SK-N-SH (cell line): ENCODE measurements at regions of chr7 and their contacts with region 1.

Region 1: DNA sequence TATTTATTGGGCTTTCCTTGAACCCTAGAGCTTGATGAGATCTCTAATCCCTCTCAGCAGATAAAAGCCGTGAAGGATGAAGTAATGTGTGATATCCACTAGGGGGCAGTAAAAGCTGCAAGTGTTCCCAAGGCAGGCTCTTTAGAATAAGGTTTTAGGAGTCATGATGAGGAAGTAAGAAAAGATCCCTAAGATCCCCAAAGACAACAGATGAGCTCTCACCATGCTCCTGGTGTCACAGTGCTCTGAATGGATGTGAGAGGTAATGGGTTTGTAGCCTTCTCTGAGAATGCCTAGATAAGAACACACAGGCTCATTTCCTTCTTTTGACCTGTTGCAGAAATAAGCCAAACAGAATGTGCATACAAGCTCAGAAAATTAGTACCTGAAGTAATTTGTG is 70.4 kb upstream of the ITPRID1 start:
- DNase-seq: peak; percentile 45
- H3K4me3 ChIP-seq: no peak overlapping the region; a peak in 1 of 4 replicates
- H3K27ac ChIP-seq: no peak overlapping the region
- H3K4me1 ChIP-seq: no peaks in the 10 kb centered on the region
- H3K27me3 ChIP-seq: peaks cover 25% of the 10 kb centered on the region
- CTCF ChIP-seq: peak; percentile 98
- EP300 ChIP-seq: no peak
- RAD21 ChIP-seq: peak; percentile 78

Region 2: DNA sequence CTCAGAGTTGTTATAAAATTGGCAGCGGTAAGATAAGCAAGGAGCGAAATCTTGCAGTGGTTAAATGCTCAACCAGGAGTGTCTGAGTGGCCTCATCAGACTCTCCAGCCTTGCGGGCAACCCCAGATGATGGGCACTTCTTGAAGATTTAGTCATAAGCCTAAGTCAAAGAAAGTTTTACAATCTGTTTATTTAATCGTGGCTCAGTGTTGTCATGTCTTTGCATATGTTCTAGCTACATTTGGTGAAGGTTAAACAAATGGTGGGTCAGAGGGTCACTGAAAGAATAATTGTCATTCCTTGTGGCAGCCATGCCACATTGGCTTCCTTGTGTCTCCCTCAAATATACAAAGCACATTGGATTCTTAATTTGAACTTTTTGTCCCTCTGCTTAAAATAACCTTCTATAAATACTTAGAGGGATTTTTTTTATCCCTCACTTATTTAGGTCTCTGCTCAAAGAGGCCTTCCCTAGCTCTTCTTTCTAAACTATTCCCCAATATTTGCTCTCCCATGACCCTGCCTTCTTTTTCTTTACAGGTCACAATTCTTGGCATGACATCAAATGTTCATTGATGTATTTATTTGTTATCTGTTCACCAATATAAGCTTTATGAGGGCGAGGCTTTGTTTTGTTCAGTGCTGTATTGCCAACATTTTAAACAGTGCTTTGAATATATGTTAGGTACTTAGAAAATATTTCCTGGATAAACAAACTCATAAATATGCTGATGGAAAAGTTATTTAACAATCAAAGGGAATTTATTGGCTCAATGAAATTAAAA is 171.6 kb before region 1 on chr7:
- CTCF ChIA-PET with region 1: no interaction called
- POLR2A ChIA-PET with region 1: no interaction called
- DNase-seq: no peak
- H3K4me3 ChIP-seq: no peak overlapping the region
- H3K27ac ChIP-seq: no peak overlapping the region
- H3K4me1 ChIP-seq: no peaks in the 10 kb centered on the region
- H3K27me3 ChIP-seq: peaks cover 4% of the 10 kb centered on the region; the same call in 1 of the 2 replicates
- CTCF ChIP-seq: no peak
- EP300 ChIP-seq: no peak
- RAD21 ChIP-seq: no peak

Region 3: DNA sequence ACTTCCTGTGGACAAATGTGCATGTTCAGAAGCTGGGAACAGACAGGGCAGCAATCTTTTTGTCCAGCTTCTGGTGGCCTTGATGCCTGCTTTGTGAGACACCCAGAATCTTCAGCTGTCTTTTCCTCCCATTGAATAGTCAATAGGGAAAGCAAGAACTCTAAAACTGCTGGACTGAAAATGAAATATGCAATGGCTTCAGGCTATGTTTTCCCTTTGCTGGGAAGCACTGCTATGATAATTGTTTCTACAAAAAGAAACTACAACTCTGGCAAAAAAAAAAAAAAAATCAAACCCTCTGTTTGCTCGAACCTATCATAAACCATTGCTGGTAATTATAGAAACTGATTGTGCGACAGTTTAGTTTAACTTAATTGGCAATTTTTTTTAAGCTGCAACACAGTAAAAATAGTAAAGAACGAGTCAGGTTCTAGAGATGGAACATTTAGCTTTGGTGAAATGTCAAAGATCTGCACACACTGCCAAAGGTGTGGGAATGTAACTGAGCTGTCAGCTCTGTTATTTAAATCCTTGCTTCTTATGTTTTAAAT is 23.9 kb before region 1 on chr7:
- CTCF ChIA-PET with region 1: interaction called, 19 read pairs
- POLR2A ChIA-PET with region 1: no interaction called
- DNase-seq: no peak
- H3K4me3 ChIP-seq: no peak overlapping the region
- H3K27ac ChIP-seq: no peak overlapping the region
- H3K4me1 ChIP-seq: no peaks in the 10 kb centered on the region; a peak in 1 of 4 replicates
- H3K27me3 ChIP-seq: peaks cover 14% of the 10 kb centered on the region
- CTCF ChIP-seq: no peak
- EP300 ChIP-seq: no peak
- RAD21 ChIP-seq: no peak

Region 4: DNA sequence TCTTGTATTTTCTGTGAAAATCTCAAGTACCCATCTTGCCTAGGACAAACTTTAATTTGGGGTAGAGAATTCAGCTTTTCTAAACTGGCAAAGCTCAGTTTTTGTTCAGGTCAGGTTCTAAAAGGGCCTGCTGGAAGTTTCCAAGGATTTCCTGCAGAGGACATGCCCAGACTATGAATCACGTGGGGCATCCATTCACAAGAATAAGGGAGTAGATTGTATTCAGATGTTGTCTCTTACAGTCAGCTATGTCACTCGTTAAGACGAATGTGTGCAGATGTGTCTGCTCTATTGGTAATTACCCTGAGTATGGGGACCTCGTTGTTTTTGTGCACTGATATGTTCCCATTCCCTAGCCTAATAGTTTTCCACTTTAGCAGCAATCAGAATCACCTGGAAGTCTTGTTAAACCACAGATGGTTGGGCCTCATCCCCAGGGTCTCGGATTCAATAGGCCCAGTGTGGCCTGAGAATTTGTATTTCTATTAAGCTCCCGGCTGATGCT is 10.6 kb before region 1 on chr7:
- CTCF ChIA-PET with region 1: interaction called, 27 read pairs
- POLR2A ChIA-PET with region 1: no interaction called
- DNase-seq: no peak
- H3K4me3 ChIP-seq: no peak overlapping the region
- H3K27ac ChIP-seq: no peak overlapping the region
- H3K4me1 ChIP-seq: no peaks in the 10 kb centered on the region
- H3K27me3 ChIP-seq: peaks cover 12% of the 10 kb centered on the region; the same call in 1 of the 2 replicates
- CTCF ChIP-seq: no peak
- EP300 ChIP-seq: no peak
- RAD21 ChIP-seq: no peak

Region 5: GRCh38 chr7:31456646-31457368 is 13.3 kb after region 1 on chr7:
- CTCF ChIA-PET with region 1: interaction called, 41 read pairs
- POLR2A ChIA-PET with region 1: no interaction called
- DNase-seq: no peak
- H3K4me3 ChIP-seq: no peak overlapping the region
- H3K27ac ChIP-seq: no peak overlapping the region
- H3K4me1 ChIP-seq: no peaks in the 10 kb centered on the region
- H3K27me3 ChIP-seq: peaks cover 26% of the 10 kb centered on the region
- CTCF ChIP-seq: no peak
- EP300 ChIP-seq: no peak
- RAD21 ChIP-seq: no peak

Region 6: GRCh38 chr7:31465285-31465684 is 21.8 kb after region 1 on chr7:
- CTCF ChIA-PET with region 1: interaction called, 15 read pairs
- POLR2A ChIA-PET with region 1: no interaction called
- DNase-seq: no peak
- H3K4me3 ChIP-seq: no peak overlapping the region
- H3K27ac ChIP-seq: no peak overlapping the region
- H3K4me1 ChIP-seq: no peaks in the 10 kb centered on the region
- H3K27me3 ChIP-seq: peaks cover 3% of the 10 kb centered on the region; the same call in 1 of the 2 replicates
- CTCF ChIP-seq: no peak
- EP300 ChIP-seq: no peak
- RAD21 ChIP-seq: no peak

Region 7: GRCh38 chr7:31633894-31634494 is 190.5 kb after region 1 on chr7:
- CTCF ChIA-PET with region 1: interaction called, 15 read pairs
- POLR2A ChIA-PET with region 1: no interaction called
- DNase-seq: peak; percentile 41
- H3K4me3 ChIP-seq: no peak overlapping the region; a peak in 1 of 4 replicates
- H3K27ac ChIP-seq: no peak overlapping the region
- H3K4me1 ChIP-seq: no peaks in the 10 kb centered on the region
- H3K27me3 ChIP-seq: peaks cover 19% of the 10 kb centered on the region
- CTCF ChIP-seq: peak; percentile 73
- EP300 ChIP-seq: no peak
- RAD21 ChIP-seq: peak; percentile 69